ENCODE measurements at regions of chr1 and their contacts with region 1.

Region 1: GRCh38 chr1:203649999-203650855 is 23.6 kb downstream of the ATP2B4 start:
- DNase-seq: peak; percentile 81
- H3K4me3 Mint-ChIP-seq: peak overlapping the region; percentile 70
- H3K27ac Mint-ChIP-seq: peak overlapping the region; percentile 90
- H3K4me1 Mint-ChIP-seq: peaks cover 72% of the 10 kb centered on the region
- H3K27me3 Mint-ChIP-seq: no peaks in the 10 kb centered on the region

Region 2: GRCh38 chr1:202957733-202958543 is 692.3 kb before region 1 on chr1 and contains the start of gene ADIPOR1:
- CTCF ChIA-PET with region 1: no interaction called
- POLR2A ChIA-PET with region 1: no interaction called
- intact Hi-C with region 1: loop called (anchors 5 kb)
- DNase-seq: peak; percentile 96
- H3K4me3 Mint-ChIP-seq: peak within 1 kb of the TSS; percentile 81
- H3K27ac Mint-ChIP-seq: peak within 1 kb of the TSS; percentile 64
- H3K4me1 Mint-ChIP-seq: peaks cover 46% of the 10 kb centered on the region
- H3K27me3 Mint-ChIP-seq: no peaks in the 10 kb centered on the region
- total RNA-seq, gene ADIPOR1: 75.2 to 76.6 TPM

Region 3: DNA sequence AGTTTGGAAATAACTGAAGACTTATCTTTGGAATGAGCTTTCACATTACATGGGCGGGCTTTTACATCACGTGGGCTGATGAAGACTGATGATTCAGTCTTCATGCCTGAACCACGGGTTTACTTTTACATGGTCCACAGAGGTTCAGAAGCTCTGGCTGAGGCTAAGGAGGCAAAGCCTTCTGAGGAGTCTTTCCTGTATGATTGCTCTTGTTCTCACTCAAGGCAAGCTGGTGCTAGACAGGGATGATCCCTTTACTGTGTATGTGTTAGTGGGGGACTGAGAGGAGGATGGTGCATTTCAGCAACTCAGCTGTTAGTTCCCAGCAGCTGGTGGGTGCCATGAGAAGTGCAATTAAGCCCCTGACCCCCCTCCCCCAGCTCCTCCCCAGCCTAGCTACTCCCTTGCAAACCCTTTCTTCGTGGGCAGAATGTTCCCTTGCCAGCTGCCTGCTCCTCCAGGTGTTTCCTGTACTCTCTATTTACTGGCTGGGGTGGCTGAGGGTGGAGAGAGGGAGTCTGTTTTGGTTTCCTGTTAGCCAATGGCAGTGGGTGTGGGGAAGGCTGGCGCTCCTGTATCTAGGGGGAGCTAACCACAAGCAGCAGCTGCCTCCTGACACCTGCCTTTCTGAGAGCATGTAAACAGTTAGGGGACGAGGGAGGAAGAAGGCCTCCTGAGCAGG is 329.5 kb before region 1 on chr1:
- CTCF ChIA-PET with region 1: no interaction called
- POLR2A ChIA-PET with region 1: no interaction called
- intact Hi-C with region 1: loop called (anchors 5 kb)
- DNase-seq: peak; percentile 78
- H3K4me3 Mint-ChIP-seq: peak overlapping the region; percentile 22
- H3K27ac Mint-ChIP-seq: peak overlapping the region; percentile 88
- H3K4me1 Mint-ChIP-seq: peaks cover 75% of the 10 kb centered on the region
- H3K27me3 Mint-ChIP-seq: no peaks in the 10 kb centered on the region

Region 4: GRCh38 chr1:203368624-203369451 is 281.4 kb before region 1 on chr1:
- CTCF ChIA-PET with region 1: no interaction called
- POLR2A ChIA-PET with region 1: no interaction called
- intact Hi-C with region 1: no loop called
- DNase-seq: no peak
- H3K4me3 Mint-ChIP-seq: no peak overlapping the region
- H3K27ac Mint-ChIP-seq: no peak overlapping the region
- H3K4me1 Mint-ChIP-seq: no peaks in the 10 kb centered on the region
- H3K27me3 Mint-ChIP-seq: peaks cover 18% of the 10 kb centered on the region

Region 5: GRCh38 chr1:203663294-203663693 is 13.1 kb after region 1 on chr1:
- CTCF ChIA-PET with region 1: interaction called, 8 read pairs
- POLR2A ChIA-PET with region 1: interaction called, 19 read pairs
- intact Hi-C with region 1: loop called (anchors 1 kb)
- DNase-seq: peak; percentile 60
- H3K4me3 Mint-ChIP-seq: no peak overlapping the region
- H3K27ac Mint-ChIP-seq: peak overlapping the region; percentile 73
- H3K4me1 Mint-ChIP-seq: peaks cover 68% of the 10 kb centered on the region
- H3K27me3 Mint-ChIP-seq: no peaks in the 10 kb centered on the region

Region 6: DNA sequence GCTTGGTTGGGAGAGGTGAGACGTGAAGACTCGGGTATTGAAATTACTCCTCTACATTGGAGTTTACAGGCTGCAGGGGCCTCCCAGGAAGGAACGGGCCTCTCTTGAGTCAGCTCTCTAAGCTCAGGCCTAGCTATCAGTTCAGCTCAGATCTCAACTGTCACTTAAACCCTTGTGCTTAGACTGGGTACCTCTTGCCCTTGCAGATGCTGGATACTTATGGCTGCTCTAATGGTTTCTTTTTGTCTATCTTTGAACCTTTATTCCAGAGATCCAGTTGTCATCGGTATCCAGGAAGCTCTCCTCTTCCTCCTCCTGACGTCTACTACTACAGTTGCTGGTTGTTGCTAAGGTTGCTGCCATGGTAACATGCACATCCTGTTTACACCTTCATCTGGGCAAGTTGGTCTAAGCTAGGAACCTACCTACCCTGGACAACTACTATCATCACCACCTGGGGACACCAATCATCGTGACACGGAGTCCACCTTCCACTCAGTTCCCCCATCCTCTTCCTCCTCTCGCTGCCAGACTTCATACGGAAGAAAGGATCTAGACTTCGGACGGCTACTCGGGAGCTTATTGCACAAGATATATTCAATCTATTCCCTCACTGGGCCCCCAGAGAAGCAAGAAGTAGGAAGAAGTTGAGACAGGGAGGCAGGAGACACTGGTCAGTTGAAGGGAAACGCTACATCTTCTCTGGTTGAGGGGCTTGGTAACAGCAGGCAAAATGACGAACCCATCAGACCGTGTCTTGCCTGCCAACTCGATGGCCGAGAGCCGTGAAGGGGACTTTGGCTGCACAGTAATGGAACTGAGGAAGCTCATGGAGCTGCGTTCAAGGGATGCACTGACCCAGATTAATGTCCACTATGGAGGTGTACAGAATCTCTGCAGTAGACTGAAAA is 32.5 kb after region 1 on chr1:
- CTCF ChIA-PET with region 1: interaction called, 14 read pairs
- POLR2A ChIA-PET with region 1: interaction called, 16 read pairs
- intact Hi-C with region 1: loop called (anchors 1 kb)
- DNase-seq: peak; percentile 78
- H3K4me3 Mint-ChIP-seq: peak overlapping the region; percentile 24
- H3K27ac Mint-ChIP-seq: peak overlapping the region; percentile 89
- H3K4me1 Mint-ChIP-seq: peaks cover 50% of the 10 kb centered on the region
- H3K27me3 Mint-ChIP-seq: no peaks in the 10 kb centered on the region

Region 7: GRCh38 chr1:203702130-203702577 is 51.9 kb after region 1 on chr1:
- CTCF ChIA-PET with region 1: interaction called, 22 read pairs
- POLR2A ChIA-PET with region 1: no interaction called
- intact Hi-C with region 1: no loop called
- DNase-seq: peak; percentile 69
- H3K4me3 Mint-ChIP-seq: no peak overlapping the region
- H3K27ac Mint-ChIP-seq: peak overlapping the region; percentile 75
- H3K4me1 Mint-ChIP-seq: peaks cover 2% of the 10 kb centered on the region
- H3K27me3 Mint-ChIP-seq: no peaks in the 10 kb centered on the region

Region 8: DNA sequence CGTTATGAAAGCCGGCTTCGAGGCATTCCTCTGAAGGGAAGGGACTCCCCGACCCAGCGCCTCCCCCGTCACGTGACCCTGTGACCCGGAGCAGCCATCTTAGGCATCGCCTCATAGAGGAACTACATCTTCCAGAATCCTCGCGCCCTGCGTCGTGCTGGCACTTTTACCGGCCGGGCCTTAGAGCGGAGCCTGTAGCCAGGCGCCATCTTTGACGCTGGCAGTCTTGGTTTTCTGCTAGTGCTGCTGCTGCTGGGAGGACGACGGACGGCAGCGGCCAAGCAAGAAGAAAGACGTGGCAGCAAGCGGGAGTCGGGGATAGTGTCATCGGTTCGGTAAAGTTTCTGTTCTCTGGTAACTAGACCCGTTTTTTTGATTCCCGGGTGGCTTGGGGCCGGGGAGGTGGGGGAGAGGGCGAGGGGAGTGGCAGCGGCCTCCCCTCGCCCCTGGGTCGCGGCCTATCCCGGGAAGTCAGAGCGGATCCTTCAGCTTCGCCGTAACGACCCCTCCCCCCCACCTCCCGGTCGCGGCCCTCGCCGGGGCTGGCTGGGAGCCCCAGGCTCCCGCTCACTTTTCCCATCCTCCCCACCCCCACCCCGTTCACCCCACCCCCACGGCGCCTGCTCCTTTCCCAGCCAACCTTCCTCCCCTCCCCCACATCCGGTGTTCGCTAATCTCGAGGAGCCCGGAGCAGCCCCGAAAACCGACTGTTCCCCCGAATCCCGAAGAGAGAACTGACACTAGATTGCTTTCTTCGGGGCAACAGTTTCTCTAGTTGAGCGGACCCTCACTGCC is 145.4 kb after region 1 on chr1 and contains the starts of genes ZBED6 and ZC3H11A:
- CTCF ChIA-PET with region 1: no interaction called
- POLR2A ChIA-PET with region 1: no interaction called
- intact Hi-C with region 1: loop called (anchors 5 kb)
- DNase-seq: peak; percentile 99
- H3K4me3 Mint-ChIP-seq: peak within 1 kb of the TSS; percentile 95
- H3K27ac Mint-ChIP-seq: peak within 1 kb of the TSS; percentile 96
- H3K4me1 Mint-ChIP-seq: peaks cover 46% of the 10 kb centered on the region
- H3K27me3 Mint-ChIP-seq: no peaks in the 10 kb centered on the region
- total RNA-seq, gene ZBED6: 18.6 to 20.4 TPM
- total RNA-seq, gene ZC3H11A: 90.2 to 91.8 TPM